ENCODE measurements at regions of chr11 and their contacts with region 1.

Region 1: GRCh38 chr11:85752890-85753581 is 57.9 kb downstream of the SYTL2 start:
- DNase-seq: peak; percentile 70 to 99 (median 84)
- ATAC-seq: peak; percentile 84
- H3K4me3 ChIP-seq: peak overlapping the region; percentile 32
- H3K4me3 Mint-ChIP-seq: peak overlapping the region; percentile 87
- H3K27ac ChIP-seq: peak overlapping the region; percentile 52 to 66
- H3K27ac Mint-ChIP-seq: peak overlapping the region; percentile 91
- H3K4me1 ChIP-seq: peaks cover 77% of the 10 kb centered on the region
- H3K4me1 Mint-ChIP-seq: peaks cover 95% of the 10 kb centered on the region
- H3K27me3 ChIP-seq: no peaks in the 10 kb centered on the region
- H3K27me3 Mint-ChIP-seq: peaks cover 7% of the 10 kb centered on the region
- CTCF ChIP-seq: peak; percentile 22

Region 2: GRCh38 chr11:85551881-85552280 is 201.2 kb before region 1 on chr11:
- CTCF ChIA-PET with region 1: no interaction called
- POLR2A ChIA-PET with region 1: no interaction called
- intact Hi-C with region 1: no loop called
- DNase-seq: no peak
- ATAC-seq: no peak
- H3K4me3 ChIP-seq: no peak overlapping the region
- H3K4me3 Mint-ChIP-seq: no peak overlapping the region
- H3K27ac ChIP-seq: no peak overlapping the region
- H3K27ac Mint-ChIP-seq: no peak overlapping the region
- H3K4me1 ChIP-seq: no peaks in the 10 kb centered on the region
- H3K4me1 Mint-ChIP-seq: no peaks in the 10 kb centered on the region
- H3K27me3 ChIP-seq: peaks cover 0 to 6% of the 10 kb centered on the region in 2 experiments
- H3K27me3 Mint-ChIP-seq: peaks cover 9% of the 10 kb centered on the region
- CTCF ChIP-seq: no peak

Region 3: DNA sequence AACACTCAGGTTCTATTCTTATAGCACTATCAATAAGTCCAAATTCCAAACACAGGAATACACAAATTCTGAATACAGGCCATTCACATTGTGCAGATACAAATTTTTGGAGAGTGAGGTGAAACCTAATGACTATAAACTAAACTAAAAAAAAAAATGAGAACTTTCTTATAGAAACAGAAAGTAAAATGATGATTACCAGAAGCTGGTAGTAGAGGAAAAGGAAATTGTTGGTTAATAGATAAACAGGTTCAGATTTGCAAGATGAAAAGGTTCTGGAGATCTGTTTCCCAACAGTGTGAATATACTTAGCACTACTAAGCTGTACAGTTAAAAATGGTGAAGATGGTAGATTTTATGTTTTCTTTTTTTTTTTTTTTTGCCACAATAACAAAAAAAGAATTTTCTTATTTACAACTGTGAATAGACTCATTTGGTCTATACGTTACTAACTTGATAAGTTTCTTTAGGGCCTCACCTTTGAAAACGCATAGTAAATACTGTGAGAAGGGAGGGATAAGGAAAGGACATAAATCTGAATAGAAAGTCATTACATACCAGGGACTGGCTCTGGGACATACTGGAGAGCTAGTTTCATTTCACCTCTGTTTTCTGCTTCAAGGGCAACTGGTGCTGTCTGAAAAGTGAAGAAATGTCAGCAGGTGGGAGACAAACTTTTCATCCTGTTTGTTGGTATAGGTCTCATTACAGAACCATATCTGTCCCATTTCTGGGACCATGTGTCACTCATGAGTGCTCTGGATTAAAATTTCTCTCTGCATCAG is 52.9 kb before region 1 on chr11:
- CTCF ChIA-PET with region 1: interaction called, 4 read pairs
- POLR2A ChIA-PET with region 1: interaction called, 6 read pairs
- intact Hi-C with region 1: loop called in 1 of 2 experiments (anchors 5 kb)
- DNase-seq: peak in 3 of 14 experiments; percentile 11 to 68 (median 30)
- ATAC-seq: peak; percentile 71
- H3K4me3 ChIP-seq: no peak overlapping the region
- H3K4me3 Mint-ChIP-seq: peak overlapping the region; percentile 16
- H3K27ac ChIP-seq: no peak overlapping the region
- H3K27ac Mint-ChIP-seq: peak overlapping the region; percentile 47
- H3K4me1 ChIP-seq: peaks cover 8% of the 10 kb centered on the region
- H3K4me1 Mint-ChIP-seq: peaks cover 22% of the 10 kb centered on the region
- H3K27me3 ChIP-seq: no peaks in the 10 kb centered on the region
- H3K27me3 Mint-ChIP-seq: no peaks in the 10 kb centered on the region
- CTCF ChIP-seq: no peak

Region 4: GRCh38 chr11:85810871-85811611 is 58.0 kb after region 1 on chr11 and contains the start of gene SYTL2:
- CTCF ChIA-PET with region 1: interaction called, 7 read pairs
- POLR2A ChIA-PET with region 1: interaction called, 21 read pairs
- intact Hi-C with region 1: loop called (anchors 1 to 2 kb)
- DNase-seq: peak; percentile 46 to 91 (median 69)
- ATAC-seq: peak; percentile 80
- H3K4me3 ChIP-seq: peak within 1 kb of the TSS; percentile 68
- H3K4me3 Mint-ChIP-seq: peak within 1 kb of the TSS; percentile 96
- H3K27ac ChIP-seq: peak within 1 kb of the TSS in 1 of 2 donors; percentile 43
- H3K27ac Mint-ChIP-seq: peak within 1 kb of the TSS; percentile 89
- H3K4me1 ChIP-seq: peaks cover 37% of the 10 kb centered on the region
- H3K4me1 Mint-ChIP-seq: peaks cover 48% of the 10 kb centered on the region
- H3K27me3 ChIP-seq: no peaks in the 10 kb centered on the region
- H3K27me3 Mint-ChIP-seq: no peaks in the 10 kb centered on the region
- CTCF ChIP-seq: no peak
- total RNA-seq, gene SYTL2: 35.4 to 36.7 TPM

Measured in CD4-positive, alpha-beta T cell (primary cell).